Activated CD4-positive, alpha-beta T cell treated with anti-CD3 and anti-CD28 coated beads for 36 hours (primary cell): ENCODE measurements at regions of chr7 and their contacts with region 1.

Region 1: GRCh38 chr7:100586266-100587025 is at the start of gene FBXO24:
- DNase-seq: peak; percentile 100
- ATAC-seq: peak; percentile 86
- H3K4me3 Mint-ChIP-seq: peak within 1 kb of the TSS; percentile 78
- H3K27ac Mint-ChIP-seq: peak within 1 kb of the TSS; percentile 82
- H3K4me1 Mint-ChIP-seq: peaks cover 26% of the 10 kb centered on the region
- H3K27me3 Mint-ChIP-seq: peaks cover 4% of the 10 kb centered on the region
- total RNA-seq, gene FBXO24: 1.4 to 2.1 TPM

Region 2: DNA sequence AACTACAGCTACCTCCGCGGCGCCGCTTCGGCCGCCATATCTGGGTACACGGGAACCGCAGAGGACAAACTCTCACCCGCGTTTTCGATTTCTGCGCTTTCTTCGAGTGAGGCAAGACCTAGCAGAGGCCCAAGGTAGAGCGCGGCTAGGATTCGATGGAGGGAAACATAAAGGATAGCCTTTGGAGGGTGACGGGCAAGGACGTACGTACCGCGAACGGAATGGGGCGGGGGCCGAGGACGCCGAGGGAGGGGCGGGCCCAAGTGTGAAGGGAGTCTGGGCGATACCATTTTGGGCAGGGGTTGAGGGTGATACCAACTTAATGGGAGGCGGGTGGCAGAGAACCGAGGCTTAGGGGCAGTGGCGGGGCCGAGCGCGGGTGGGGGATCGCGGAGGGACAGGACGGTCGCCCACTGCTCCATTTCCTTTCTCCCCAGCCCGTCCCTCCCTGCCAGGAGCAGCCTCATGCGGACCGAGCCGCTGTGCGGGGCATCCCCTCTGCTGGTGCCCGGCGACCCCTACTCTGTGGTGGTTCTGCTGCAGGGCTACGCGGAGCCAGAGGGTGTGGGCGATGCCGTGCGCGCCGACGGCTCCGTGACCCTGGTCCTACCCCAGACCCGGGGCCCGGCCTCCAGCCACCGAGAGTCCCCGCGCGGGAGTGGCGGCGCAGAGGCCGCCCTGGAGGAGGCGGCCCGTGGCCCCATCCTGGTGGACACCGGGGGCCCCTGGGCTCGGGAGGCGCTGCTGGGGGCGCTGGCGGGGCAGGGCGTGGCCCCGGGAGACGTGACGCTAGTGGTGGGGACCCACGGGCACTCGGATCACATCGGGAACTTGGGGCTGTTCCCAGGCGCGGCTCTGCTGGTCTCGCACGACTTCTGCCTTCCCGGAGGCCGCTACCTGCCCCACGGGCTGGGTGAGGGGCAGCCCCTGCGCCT is 459.2 kb before region 1 on chr7 and contains the start of gene MBLAC1:
- CTCF ChIA-PET with region 1: no interaction called
- POLR2A ChIA-PET with region 1: no interaction called
- intact Hi-C with region 1: loop called in 1 of 2 experiments (anchors 5 kb)
- DNase-seq: peak; percentile 95
- ATAC-seq: peak; percentile 74
- H3K4me3 Mint-ChIP-seq: peak within 1 kb of the TSS; percentile 93
- H3K27ac Mint-ChIP-seq: peak within 1 kb of the TSS; percentile 99
- H3K4me1 Mint-ChIP-seq: peaks cover 28% of the 10 kb centered on the region
- H3K27me3 Mint-ChIP-seq: no peaks in the 10 kb centered on the region
- total RNA-seq, gene MBLAC1: 1.6 to 2.2 TPM

Region 3: DNA sequence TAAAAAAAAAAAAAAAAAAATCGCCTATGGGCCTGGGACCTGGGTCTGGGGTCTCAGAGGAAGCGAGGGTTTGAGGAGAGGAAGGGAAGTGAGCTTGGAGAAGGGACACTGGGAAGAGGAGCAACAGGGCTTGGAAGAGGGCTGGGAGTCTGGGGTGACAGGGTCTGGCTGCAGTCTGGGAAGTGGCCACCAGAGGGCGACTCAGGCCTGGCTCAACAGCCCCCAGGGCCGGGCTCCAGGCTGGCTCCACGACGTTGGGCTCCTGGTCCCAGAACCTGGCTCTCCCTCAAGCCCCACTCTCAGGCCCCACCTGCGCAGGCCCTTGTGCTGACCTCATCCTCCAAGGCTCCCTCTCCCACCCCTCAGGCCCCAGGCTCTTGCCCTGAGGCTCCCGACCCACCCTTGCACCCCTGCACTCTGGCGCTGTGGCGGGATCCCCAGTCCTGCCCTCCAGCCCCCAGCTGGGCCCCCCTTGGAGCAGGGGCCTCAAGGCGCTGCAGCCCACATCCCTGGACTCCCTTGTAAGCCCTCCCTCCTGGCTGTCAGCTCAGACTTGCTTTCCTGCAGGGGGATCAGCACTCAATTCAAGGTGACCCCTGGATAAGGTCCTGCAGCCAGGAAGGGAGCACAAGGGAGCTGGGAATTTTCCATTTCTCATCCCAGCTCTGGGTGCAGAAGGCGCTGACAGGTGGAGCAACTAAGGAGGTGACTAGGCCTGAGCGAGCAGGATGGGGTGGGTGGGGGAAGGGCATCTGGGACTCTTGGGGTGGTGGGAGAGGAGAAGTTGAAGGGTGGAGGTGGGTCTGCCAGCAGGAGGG is 117.0 kb before region 1 on chr7:
- CTCF ChIA-PET with region 1: interaction called, 18 read pairs
- POLR2A ChIA-PET with region 1: no interaction called
- intact Hi-C with region 1: no loop called
- DNase-seq: peak; percentile 91
- ATAC-seq: peak; percentile 92
- H3K4me3 Mint-ChIP-seq: no peak overlapping the region
- H3K27ac Mint-ChIP-seq: no peak overlapping the region
- H3K4me1 Mint-ChIP-seq: peaks cover 31% of the 10 kb centered on the region
- H3K27me3 Mint-ChIP-seq: no peaks in the 10 kb centered on the region

Region 4: DNA sequence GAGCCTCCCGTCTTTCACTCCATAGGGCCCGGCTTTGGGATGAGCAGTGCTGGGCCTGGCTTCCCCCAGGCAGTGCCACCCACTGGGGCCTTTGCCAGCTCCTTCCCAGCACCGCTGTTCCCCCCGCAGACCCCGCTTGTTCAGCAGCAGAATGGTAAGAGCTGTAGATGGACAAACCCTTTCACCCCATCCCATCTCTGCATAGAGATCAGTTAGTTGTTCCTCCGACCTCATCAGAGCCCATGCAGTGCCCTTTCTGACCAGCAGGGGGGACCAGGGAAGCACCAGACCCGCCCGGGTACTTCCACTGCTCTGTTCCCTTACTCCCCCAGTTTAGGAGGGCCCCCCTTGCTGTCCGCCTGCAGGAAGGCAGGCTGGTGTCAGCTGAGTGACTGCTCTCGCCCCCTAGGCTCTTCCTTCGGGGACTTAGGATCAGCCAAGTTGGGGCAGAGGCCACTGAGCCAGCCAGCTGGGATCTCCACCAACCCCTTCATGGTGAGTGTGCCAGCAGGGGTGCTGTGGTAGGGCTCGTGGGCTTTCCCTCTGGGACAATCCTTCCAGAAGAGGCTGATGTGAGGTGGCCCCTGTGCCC is 22.5 kb before region 1 on chr7:
- CTCF ChIA-PET with region 1: interaction called, 10 read pairs
- POLR2A ChIA-PET with region 1: interaction called, 3 read pairs
- intact Hi-C with region 1: loop called in 1 of 2 experiments (anchors 2 kb)
- DNase-seq: peak; percentile 91
- ATAC-seq: peak; percentile 69
- H3K4me3 Mint-ChIP-seq: no peak overlapping the region
- H3K27ac Mint-ChIP-seq: no peak overlapping the region
- H3K4me1 Mint-ChIP-seq: peaks cover 24% of the 10 kb centered on the region
- H3K27me3 Mint-ChIP-seq: no peaks in the 10 kb centered on the region

Region 5: DNA sequence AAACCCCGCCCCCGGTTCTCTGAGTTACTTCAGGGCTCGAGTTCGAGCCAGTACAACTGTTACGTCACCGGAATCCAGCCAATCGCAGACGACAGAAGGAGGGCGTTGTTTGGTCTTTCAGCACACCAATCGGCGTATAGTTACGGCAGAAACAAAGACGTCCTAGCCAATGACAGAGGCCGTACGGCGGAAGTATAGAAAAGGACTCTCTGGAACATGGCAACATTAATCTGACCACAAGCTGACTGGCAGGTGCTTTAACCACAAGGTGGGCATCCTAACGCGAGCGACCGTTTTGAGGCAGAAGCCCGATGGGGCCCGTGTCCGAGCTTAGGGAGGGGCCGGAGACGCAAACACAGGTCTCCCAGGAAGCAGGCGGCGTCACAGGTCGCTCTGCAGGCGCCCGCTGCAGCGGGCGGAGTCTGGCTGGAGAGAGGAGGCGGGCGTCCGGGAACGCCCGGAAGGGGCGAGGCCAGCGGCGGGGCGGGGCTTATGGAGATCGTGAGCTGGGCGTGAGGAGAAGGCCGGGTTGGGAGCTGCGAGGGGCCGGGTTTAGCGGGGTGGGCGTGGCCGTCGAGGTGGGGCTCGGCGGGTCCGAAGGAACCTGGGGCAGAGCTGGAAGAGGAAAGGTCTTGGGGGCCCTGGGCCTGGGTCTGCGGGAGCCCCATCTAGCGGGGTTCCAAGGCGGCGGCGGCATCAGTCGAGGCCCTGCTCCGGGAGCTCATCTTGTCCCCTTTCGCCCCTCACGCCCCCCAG is 25.7 kb after region 1 on chr7 and contains the start of gene MOSPD3:
- CTCF ChIA-PET with region 1: interaction called, 6 read pairs
- POLR2A ChIA-PET with region 1: interaction called, 12 read pairs
- intact Hi-C with region 1: loop called (anchors 1 kb)
- DNase-seq: peak; percentile 99
- ATAC-seq: peak; percentile 94
- H3K4me3 Mint-ChIP-seq: peak within 1 kb of the TSS; percentile 83
- H3K27ac Mint-ChIP-seq: peak within 1 kb of the TSS; percentile 100
- H3K4me1 Mint-ChIP-seq: peaks cover 17% of the 10 kb centered on the region
- H3K27me3 Mint-ChIP-seq: no peaks in the 10 kb centered on the region
- total RNA-seq, gene MOSPD3: 14.4 to 19.9 TPM

Region 6: DNA sequence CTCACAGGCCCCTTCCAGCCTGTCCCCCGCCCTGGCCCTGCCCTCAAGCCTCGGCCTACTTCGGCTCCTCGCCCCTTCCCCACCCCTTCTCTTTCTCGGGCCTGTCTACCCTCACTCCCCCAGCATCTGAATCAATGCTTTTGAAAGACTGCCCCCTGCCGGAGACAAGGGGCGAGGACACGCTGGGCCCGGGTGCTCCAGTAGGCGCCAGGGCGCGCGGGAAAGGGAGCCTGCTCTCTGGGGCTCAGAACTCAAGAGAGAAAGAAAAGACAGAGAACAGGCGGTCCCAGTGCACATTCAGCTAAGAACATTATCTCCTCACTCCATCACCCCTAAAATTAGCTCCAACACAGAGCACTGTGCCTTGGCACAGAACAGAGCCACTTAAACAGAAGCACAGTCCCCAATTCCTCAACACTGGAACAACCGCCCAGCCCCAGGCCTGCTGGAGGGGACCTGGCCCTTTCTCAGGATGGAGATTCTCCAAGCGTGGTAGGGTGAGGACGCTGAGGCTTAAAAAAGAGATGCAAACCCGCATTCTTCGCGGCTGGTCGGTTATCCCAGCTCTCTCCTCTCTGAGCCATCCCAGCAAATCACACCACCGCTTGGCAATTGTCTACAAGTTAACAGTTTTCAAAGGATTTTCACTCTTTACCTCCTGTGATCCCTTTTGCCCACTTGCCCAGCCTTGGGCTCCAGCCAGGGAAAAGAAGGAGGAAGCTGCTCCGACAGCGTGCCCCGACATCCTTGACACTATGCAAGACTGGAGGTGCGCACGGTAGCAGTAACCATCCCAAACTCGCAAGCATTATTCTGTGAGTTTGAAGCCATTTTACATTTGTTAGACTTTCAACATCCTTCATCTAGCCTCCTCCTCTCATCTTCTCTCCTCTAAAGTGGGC is 105.5 kb after region 1 on chr7:
- CTCF ChIA-PET with region 1: interaction called, 19 read pairs
- POLR2A ChIA-PET with region 1: interaction called, 11 read pairs
- intact Hi-C with region 1: loop called in 1 of 2 experiments (anchors 1 kb)
- DNase-seq: peak; percentile 92
- ATAC-seq: peak; percentile 78
- H3K4me3 Mint-ChIP-seq: peak overlapping the region; percentile 89
- H3K27ac Mint-ChIP-seq: peak overlapping the region; percentile 88
- H3K4me1 Mint-ChIP-seq: peaks cover 48% of the 10 kb centered on the region
- H3K27me3 Mint-ChIP-seq: no peaks in the 10 kb centered on the region

Region 7: GRCh38 chr7:101251871-101252659 is 665.6 kb after region 1 on chr7:
- CTCF ChIA-PET with region 1: no interaction called
- POLR2A ChIA-PET with region 1: no interaction called
- intact Hi-C with region 1: loop called in 1 of 2 experiments (anchors 1 kb)
- DNase-seq: peak; percentile 99
- ATAC-seq: peak; percentile 100
- H3K4me3 Mint-ChIP-seq: peak overlapping the region; percentile 96
- H3K27ac Mint-ChIP-seq: peak overlapping the region; percentile 96
- H3K4me1 Mint-ChIP-seq: peaks cover 26% of the 10 kb centered on the region
- H3K27me3 Mint-ChIP-seq: peaks cover 5% of the 10 kb centered on the region